Dorsolateral prefrontal cortex (tissue), 120 donors: ENCODE measurements at regions of chr4 and their contacts with region 1.

Region 1: GRCh38 chr4:20773144-20773997 is 73.1 kb downstream of the PACRGL start:
- DNase-seq: peak in 5 of 10 donors; percentile 8 to 61 (median 33)
- H3K4me3 ChIP-seq: peak overlapping the region in 15 of 59 donors; percentile 1 to 28 (median 15)
- H3K27ac ChIP-seq: no peak overlapping the region
- H3K27me3 ChIP-seq: no peaks in the 10 kb centered on the region
- CTCF ChIP-seq: peak; percentile 41 to 93 (median 77)

Region 2: DNA sequence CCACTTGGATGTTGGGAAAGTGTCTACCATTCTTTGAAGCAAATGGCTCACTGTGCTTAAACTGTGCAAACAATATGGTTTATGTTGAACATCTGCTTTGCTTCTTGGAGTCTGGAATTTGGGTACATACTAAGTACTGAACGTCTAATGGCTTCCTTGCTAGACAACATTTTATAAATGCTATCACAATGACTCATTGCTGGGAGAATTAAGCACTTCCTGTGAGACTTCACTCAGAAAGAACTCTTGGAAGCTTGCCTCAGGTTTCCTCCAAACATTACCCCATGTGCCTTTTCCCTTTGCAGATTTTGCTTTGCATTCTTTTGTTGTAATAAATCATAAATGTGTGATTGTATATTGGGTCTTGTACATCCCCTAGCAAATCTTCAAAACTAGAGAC is 66.6 kb after region 1 on chr4:
- intact Hi-C with region 1: no loop called
- DNase-seq: no peak
- H3K4me3 ChIP-seq: no peak overlapping the region
- H3K27ac ChIP-seq: no peak overlapping the region
- H3K27me3 ChIP-seq: no peaks in the 10 kb centered on the region
- CTCF ChIP-seq: no peak

Region 3: GRCh38 chr4:21134994-21135393 is 361.6 kb after region 1 on chr4:
- intact Hi-C with region 1: loop called in 1 of 2 experiments (anchors 10 kb)
- DNase-seq: no peak
- H3K4me3 ChIP-seq: no peak overlapping the region
- H3K27ac ChIP-seq: no peak overlapping the region
- H3K27me3 ChIP-seq: no peaks in the 10 kb centered on the region
- CTCF ChIP-seq: peak in 37 of 56 donors; percentile 9 to 55 (median 34)